ENCODE measurements at regions of chr1 and their contacts with region 1.

Region 1: GRCh38 chr1:7667625-7668218 is 103.4 kb upstream of the VAMP3 start:
- DNase-seq: peak; percentile 42
- ATAC-seq: peak; percentile 81
- H3K4me3 ChIP-seq: no peak overlapping the region
- H3K27ac ChIP-seq: no peak overlapping the region; the same call in 1 of the 2 replicates
- H3K4me1 ChIP-seq: peaks cover 0 to 8% of the 10 kb centered on the region in 2 experiments; a peak in 2 of 4 replicates
- H3K27me3 ChIP-seq: no peaks in the 10 kb centered on the region
- CTCF ChIP-seq: peak; percentile 99 to 100 (median 99)
- POLR2A ChIP-seq: no peak
- RAD21 ChIP-seq: peak; percentile 99

Region 2: DNA sequence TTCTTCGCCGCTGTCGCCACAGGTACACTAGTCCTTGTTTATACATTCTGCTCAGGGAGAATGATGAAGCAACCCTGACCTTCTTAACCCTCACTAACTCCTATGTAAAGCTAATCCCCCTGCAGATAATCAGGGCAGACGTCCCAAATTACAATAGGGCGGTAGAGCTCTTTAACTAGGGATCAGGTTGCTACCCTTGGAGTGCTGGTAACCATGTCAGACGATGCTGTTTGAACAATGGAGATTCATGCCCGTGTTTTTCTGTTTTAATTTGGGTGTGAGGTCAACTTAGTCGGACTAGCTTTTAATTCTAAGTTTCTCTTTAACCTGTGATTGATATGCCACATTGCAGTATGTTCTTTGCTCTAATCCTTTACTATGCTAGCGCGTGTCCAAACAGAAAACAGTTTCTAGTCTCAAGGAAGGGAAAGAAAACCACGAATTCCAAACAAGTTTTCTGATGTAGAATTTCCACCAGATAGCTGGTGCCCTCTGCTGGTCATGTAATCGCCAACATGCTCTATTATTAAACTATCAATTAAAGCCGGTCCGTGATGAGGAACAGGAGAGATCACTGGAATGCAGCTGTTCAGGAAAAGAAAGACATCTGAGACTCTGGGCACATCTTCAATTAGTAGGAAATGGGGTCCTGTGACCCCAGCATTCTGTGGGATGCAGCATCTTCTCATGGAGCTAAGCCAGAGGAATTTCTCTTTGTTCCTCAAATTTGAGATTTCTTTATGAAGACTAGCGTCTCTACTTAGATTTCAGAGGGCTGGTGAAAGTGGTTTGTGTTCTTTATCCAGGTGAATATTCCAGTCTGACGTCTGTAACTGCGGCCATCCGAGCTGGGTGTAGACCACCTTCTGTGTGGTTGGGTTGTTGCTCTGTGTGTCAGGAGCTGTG is 85.0 kb after region 1 on chr1:
- CTCF ChIA-PET with region 1: interaction called, 96 read pairs
- POLR2A ChIA-PET with region 1: no interaction called
- RAD21 ChIA-PET with region 1: interaction called, 8 to 10 read pairs
- intact Hi-C with region 1: loop called (anchors 1 kb)
- DNase-seq: peak; percentile 32
- ATAC-seq: peak; percentile 72
- H3K4me3 ChIP-seq: no peak overlapping the region
- H3K27ac ChIP-seq: no peak overlapping the region
- H3K4me1 ChIP-seq: no peaks in the 10 kb centered on the region
- H3K27me3 ChIP-seq: no peaks in the 10 kb centered on the region
- CTCF ChIP-seq: peak; percentile 77 to 93 (median 89)
- POLR2A ChIP-seq: no peak
- RAD21 ChIP-seq: peak; percentile 84

Region 3: GRCh38 chr1:7902478-7903085 is 234.9 kb after region 1 on chr1:
- CTCF ChIA-PET with region 1: interaction called, 13 read pairs
- POLR2A ChIA-PET with region 1: no interaction called
- RAD21 ChIA-PET with region 1: no interaction called
- intact Hi-C with region 1: loop called (anchors 1 kb)
- DNase-seq: peak; percentile 67
- ATAC-seq: peak; percentile 96
- H3K4me3 ChIP-seq: peak overlapping the region in 1 of 2 experiments; percentile 17; a peak in 2 of 4 replicates
- H3K27ac ChIP-seq: no peak overlapping the region
- H3K4me1 ChIP-seq: peaks cover 0 to 5% of the 10 kb centered on the region in 2 experiments; a peak in 1 of 4 replicates
- H3K27me3 ChIP-seq: no peaks in the 10 kb centered on the region
- CTCF ChIP-seq: peak; percentile 60 to 78 (median 74)
- POLR2A ChIP-seq: no peak
- RAD21 ChIP-seq: peak; percentile 87

Region 4: DNA sequence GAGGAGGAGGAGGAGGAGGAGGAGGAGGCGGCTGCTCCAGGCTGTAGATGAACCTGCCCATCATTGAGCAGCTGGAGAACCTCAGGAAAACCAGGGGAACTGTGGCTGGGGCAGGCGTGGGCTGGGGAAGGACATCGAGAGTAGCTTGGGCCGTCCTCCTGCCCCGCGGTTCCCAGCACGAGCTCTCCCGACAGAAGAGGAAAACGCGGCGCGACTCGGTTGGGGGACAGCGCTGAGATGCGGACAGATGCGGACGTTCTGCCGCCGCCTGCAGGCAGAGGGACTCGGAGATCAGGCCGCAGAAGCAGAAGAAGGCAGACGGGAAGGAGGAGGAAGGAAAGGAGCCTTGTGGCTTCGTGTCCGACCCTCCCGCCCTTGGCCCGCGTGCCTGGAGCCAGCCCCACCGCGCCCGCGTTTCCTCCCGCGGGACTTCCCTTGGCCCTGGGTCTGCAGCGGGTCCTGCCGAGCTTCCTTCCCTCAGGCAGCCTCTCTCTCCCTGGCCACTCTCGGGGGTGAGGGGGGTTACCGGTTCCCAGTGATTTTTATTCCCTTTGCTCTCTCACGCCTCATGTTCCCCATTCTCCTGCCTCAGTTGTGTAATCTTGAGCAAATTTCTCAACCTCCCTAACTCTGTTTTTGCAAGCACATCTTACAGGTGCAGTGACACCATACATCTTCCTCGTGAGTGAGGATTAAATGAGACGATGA is 274.6 kb after region 1 on chr1:
- CTCF ChIA-PET with region 1: interaction called, 3 read pairs
- POLR2A ChIA-PET with region 1: no interaction called
- RAD21 ChIA-PET with region 1: no interaction called
- intact Hi-C with region 1: loop called (anchors 10 kb)
- DNase-seq: no peak
- ATAC-seq: peak; percentile 81
- H3K4me3 ChIP-seq: peak overlapping the region in 1 of 2 experiments; percentile 17; a peak in 1 of 4 replicates
- H3K27ac ChIP-seq: no peak overlapping the region
- H3K4me1 ChIP-seq: peaks cover 0 to 30% of the 10 kb centered on the region in 2 experiments; a peak in 2 of 4 replicates
- H3K27me3 ChIP-seq: no peaks in the 10 kb centered on the region; the same call in 1 of the 2 replicates
- CTCF ChIP-seq: 0 out of 6 replicates have a peak, but pooled peaks of 1 of the 3 experiments have one; percentile 11
- POLR2A ChIP-seq: no peak
- RAD21 ChIP-seq: peak; percentile 14; the same call in 1 of the 2 replicates

Region 5: GRCh38 chr1:7961216-7962015 is 293.7 kb after region 1 on chr1 and contains the start of gene PARK7:
- CTCF ChIA-PET with region 1: interaction called, 4 read pairs
- POLR2A ChIA-PET with region 1: no interaction called
- RAD21 ChIA-PET with region 1: no interaction called
- intact Hi-C with region 1: loop called (anchors 5 kb)
- DNase-seq: peak; percentile 97
- ATAC-seq: peak; percentile 97
- H3K4me3 ChIP-seq: peak within 1 kb of the TSS; percentile 69 to 79
- H3K27ac ChIP-seq: peak within 1 kb of the TSS; percentile 87
- H3K4me1 ChIP-seq: peaks cover 2 to 16% of the 10 kb centered on the region in 2 experiments; a peak in 3 of 4 replicates
- H3K27me3 ChIP-seq: no peaks in the 10 kb centered on the region
- CTCF ChIP-seq: peak; percentile 9 to 57 (median 36); a peak in 3 of 6 replicates
- POLR2A ChIP-seq: peak; percentile 97
- RAD21 ChIP-seq: peak; percentile 51
- total RNA-seq, gene PARK7: 370 TPM

Region 6: DNA sequence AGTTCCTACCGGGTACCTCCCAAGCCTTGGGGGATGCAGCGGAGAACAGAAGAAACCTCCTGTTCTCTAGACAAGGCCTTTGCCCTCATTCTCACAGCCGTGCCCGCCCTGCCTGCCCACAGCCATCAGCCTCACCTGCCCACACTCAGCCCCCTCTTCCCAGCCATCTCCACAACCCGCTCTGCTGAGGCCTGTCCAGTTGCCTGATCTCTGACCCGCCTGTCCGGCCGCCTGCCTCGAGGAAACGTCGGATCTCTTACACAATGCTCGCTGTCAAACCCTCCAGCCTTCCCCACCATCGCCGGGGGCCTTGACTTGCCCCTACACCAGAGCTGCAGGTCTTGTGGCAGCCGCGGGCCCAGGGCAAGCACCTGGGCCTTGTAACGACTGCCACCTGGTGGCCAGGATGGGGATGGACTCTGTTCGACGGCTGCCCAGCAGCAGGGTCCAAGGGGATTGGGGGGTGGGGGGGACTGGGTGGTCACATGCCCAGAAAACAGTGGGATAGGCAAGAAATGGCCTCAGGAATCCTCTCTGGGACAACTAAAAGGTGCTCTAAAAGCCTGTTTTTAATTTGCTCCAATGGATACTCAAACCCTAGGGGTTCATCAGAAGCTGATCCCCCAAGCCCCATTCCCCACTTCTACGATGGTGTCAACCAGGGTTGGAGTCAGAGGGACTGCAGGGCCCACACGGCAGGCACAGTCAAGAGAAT is 681.2 kb after region 1 on chr1:
- CTCF ChIA-PET with region 1: interaction called, 4 read pairs
- POLR2A ChIA-PET with region 1: interaction called, 3 read pairs
- RAD21 ChIA-PET with region 1: no interaction called
- intact Hi-C with region 1: loop called (anchors 5 kb)
- DNase-seq: peak; percentile 27
- ATAC-seq: peak; percentile 82
- H3K4me3 ChIP-seq: no peak overlapping the region
- H3K27ac ChIP-seq: no peak overlapping the region
- H3K4me1 ChIP-seq: peaks cover 3 to 26% of the 10 kb centered on the region in 2 experiments
- H3K27me3 ChIP-seq: no peaks in the 10 kb centered on the region
- CTCF ChIP-seq: peak; percentile 84 to 92 (median 87)
- POLR2A ChIP-seq: no peak
- RAD21 ChIP-seq: peak; percentile 98